ENCODE measurements at regions of chr7 and their contacts with region 1.

Region 1: GRCh38 chr7:127107601-127108007 is 145.1 kb downstream of the GRM8 start:
- DNase-seq: peak; percentile 55
- ATAC-seq: peak; percentile 96
- H3K4me3 ChIP-seq: no peak overlapping the region
- H3K27ac ChIP-seq: no peak overlapping the region
- H3K4me1 ChIP-seq: no peaks in the 10 kb centered on the region
- H3K27me3 ChIP-seq: no peaks in the 10 kb centered on the region
- CTCF ChIP-seq: peak; percentile 50
- EP300 ChIP-seq: no peak
- POLR2A ChIP-seq: no peak
- RAD21 ChIP-seq: no peak

Region 2: DNA sequence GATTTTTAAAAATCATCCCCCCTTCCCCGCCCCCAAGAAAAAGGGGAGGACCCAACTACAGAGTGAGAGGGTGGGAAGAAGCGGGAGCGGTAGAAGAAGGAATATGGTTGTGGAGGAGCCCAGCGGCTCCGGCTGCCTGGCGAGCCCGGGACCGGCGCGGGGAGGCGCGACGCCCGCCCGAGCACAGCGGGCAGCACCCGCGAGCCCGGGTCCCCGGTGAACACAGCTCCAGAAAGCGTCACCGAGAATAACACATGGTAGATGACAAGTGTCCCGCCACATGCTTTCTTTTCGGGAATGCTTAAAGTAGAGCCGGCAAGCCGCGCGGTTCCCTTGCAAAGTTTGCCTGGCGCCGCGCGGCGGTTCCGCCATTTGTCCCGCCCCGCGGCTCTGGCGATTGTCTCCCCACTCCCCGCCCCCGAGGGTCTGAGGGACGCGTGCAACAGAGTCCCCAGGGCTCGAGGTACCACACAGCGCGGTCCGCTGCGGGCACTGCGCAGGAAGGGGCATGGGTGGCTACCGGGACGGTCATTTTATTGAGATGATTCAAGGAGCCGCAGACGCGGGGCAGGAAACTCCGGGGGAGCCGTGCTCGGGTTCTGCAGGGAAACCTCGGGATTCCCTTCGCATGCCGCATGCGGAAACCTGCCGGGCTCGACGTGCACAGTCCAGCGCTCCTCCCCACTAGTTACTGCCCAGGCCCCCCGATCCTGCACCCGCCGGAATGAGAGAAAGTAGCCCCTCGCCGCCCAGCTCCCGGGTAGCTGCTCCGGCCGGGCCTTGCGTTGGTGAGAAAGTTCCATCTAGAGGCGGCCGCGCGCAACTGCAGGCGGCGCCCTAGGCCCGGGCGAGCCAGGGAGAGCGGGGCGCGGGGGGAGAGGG is 145.9 kb after region 1 on chr7:
- CTCF ChIA-PET with region 1: interaction called, 8 read pairs
- POLR2A ChIA-PET with region 1: no interaction called
- in situ Hi-C with region 1: loop called (anchors 10 kb)
- intact Hi-C with region 1: loop called (anchors 1 kb)
- DNase-seq: peak; percentile 8
- ATAC-seq: peak; percentile 94
- H3K4me3 ChIP-seq: peak overlapping the region; percentile 65 to 73 (median 70)
- H3K27ac ChIP-seq: no peak overlapping the region
- H3K4me1 ChIP-seq: 0 out of 2 replicates have a peak, but pooled peaks cover 5% of the 10 kb centered on the region
- H3K27me3 ChIP-seq: peaks cover 8 to 66% of the 10 kb centered on the region in 2 experiments
- CTCF ChIP-seq: peak; percentile 84
- EP300 ChIP-seq: no peak
- POLR2A ChIP-seq: no peak
- RAD21 ChIP-seq: peak; percentile 54

Region 3: DNA sequence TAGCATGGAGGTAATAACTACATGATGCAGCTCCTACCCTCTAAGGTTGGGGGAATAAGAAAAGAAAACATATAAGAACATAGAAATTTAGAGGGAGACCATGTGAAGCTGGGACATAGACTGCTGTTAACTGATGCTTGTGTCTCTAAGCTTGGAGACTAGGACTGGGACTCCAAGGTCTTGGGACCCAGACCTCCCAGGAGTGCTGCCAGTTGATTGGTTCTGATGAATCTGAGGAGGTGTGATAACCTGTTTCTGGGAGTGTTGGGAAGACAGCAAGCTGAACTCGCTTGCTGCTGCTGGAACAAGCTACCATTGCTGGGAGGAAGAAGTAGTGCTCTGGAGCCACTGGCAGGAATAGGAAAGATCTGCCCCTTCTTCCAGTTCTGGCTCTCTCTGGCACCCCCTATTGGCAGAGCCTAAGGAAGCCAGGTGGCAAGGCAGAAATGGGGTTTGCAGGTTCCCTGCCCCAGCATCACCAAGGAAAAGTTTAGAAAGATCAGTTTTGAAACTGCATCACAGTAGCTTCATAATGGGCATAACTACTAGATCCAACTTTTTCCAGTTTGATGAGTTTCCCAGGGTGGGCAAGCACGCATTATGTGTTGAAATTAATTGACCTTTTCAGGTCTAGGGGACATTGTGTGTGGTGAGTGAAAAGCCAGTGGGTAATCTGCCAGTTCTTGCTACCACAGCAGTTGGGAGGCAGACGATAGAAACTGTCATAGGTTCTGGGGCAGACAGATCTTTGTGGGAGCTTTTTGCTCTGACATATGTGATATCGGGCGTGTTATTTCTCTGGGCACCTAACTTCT is 685.1 kb after region 1 on chr7:
- CTCF ChIA-PET with region 1: no interaction called
- POLR2A ChIA-PET with region 1: no interaction called
- in situ Hi-C with region 1: no loop called
- intact Hi-C with region 1: no loop called
- DNase-seq: peak; percentile 23
- ATAC-seq: peak; percentile 84
- H3K4me3 ChIP-seq: no peak overlapping the region
- H3K27ac ChIP-seq: no peak overlapping the region
- H3K4me1 ChIP-seq: no peaks in the 10 kb centered on the region
- H3K27me3 ChIP-seq: no peaks in the 10 kb centered on the region
- CTCF ChIP-seq: peak; percentile 55
- EP300 ChIP-seq: no peak
- POLR2A ChIP-seq: no peak
- RAD21 ChIP-seq: no peak